Lower leg skin (tissue), 4 donors: ENCODE measurements at regions of chr3 and their contacts with region 1.

Region 1: GRCh38 chr3:149273096-149273751 is 51.6 kb upstream of the CP start:
- DNase-seq: peak in 1 of 2 donors; percentile 37
- H3K4me3 ChIP-seq: no peak overlapping the region
- CTCF ChIP-seq: peak in 1 of 3 donors; percentile 97
- POLR2A ChIP-seq: no peak

Region 2: GRCh38 chr3:148861277-148861869 is 411.9 kb before region 1 on chr3:
- intact Hi-C with region 1: loop called (anchors 10 kb)
- DNase-seq: no peak
- H3K4me3 ChIP-seq: no peak overlapping the region
- CTCF ChIP-seq: no peak
- POLR2A ChIP-seq: no peak

Region 3: GRCh38 chr3:149879872-149880271 is 606.6 kb after region 1 on chr3:
- intact Hi-C with region 1: no loop called
- DNase-seq: peak; percentile 36 to 88
- H3K4me3 ChIP-seq: no peak overlapping the region
- CTCF ChIP-seq: no peak
- POLR2A ChIP-seq: no peak